ENCODE measurements at regions of chr7 and their contacts with region 1.

Region 1: GRCh38 chr7:105149827-105150226 is 135.8 kb downstream of the KMT2E start:
- DNase-seq: no peak
- ATAC-seq: no peak

Region 2: DNA sequence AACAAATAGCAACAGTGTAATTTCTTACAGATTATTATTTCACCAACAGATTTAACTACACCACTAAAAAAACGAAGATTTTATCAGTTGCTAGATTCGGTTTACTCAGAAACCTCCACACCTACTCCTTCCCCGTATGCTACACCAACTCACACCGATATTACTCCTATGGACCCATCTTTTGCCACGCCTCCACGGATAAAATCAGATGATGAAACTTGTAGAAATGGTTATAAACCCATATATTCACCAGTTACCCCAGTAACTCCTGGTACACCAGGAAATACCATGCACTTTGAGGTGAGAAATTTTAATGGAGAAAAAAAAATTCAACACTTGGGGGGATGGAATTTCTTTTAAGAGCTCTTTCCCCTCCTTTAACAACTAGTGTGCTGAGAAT is 43.4 kb before region 1 on chr7:
- intact Hi-C with region 1: no loop called
- DNase-seq: no peak
- ATAC-seq: no peak

Region 3: DNA sequence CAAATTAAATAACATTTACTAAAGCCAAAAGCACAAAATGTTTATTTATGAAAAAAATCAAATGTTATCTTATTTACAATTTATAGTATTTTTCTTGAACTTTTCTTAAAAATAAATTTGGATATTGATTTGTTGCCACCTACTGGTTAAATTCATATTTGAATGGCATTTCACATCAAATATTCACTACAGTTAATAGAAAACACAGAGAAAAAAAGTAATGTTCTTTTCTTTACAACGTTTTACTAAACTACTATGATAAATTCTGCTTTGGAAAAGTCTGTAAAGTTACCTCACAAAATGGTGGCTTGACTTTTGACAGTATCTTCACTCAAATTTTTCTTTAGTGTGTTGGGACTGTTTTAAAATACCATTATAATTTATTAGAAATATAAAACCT is 186.2 kb after region 1 on chr7:
- intact Hi-C with region 1: loop called in 1 of 2 experiments (anchors 10 kb)
- DNase-seq: no peak
- ATAC-seq: no peak

Region 4: DNA sequence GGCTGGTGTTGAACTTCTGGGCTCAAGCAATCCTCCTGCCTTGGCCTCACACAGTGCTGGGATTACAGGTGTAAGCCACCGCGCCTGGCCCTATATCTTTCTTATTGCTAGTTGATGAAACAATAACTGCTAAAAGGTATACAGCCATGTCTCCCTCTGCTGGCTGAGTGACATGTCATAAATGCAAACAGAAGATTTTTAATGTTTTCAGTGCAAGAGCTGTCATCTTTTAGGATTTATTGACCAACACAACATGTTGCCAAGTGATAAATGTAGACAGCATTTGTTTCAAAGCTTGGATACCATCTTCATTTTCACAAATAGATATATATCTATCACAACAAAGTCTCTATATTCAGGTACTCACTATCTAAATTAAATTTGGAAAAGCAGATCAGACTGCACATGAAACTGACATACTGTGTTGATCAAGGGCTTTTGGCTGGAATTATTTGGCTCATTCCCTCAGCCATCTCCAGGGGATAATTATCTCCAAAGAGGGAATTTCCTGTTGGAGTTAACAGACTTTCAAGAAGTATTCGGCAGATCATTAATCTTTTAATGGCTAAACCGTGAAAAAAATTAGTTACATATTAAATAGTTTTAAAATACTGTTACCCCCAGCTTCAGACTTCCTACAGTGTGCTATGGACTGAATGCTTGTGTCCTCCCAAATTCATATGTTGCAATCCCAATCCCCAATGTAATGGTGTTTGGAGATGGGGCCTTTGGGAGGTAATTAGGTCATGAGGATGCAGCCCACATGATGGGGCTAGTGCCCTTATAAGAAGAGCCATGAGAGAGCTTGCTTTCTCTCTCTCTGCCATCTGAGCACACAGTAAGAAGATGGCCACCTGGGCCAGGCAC is 280.2 kb after region 1 on chr7:
- intact Hi-C with region 1: loop called in 1 of 2 experiments (anchors 10 kb)
- DNase-seq: peak; percentile 37
- ATAC-seq: peak; percentile 27 to 49

Measured in left cardiac atrium (tissue), 4 donors.